Activated CD4-positive, alpha-beta memory T cell treated with anti-CD3 and anti-CD28 coated beads for 36 hours (primary cell): ENCODE measurements at regions of chr7 and their contacts with region 1.

Region 1: DNA sequence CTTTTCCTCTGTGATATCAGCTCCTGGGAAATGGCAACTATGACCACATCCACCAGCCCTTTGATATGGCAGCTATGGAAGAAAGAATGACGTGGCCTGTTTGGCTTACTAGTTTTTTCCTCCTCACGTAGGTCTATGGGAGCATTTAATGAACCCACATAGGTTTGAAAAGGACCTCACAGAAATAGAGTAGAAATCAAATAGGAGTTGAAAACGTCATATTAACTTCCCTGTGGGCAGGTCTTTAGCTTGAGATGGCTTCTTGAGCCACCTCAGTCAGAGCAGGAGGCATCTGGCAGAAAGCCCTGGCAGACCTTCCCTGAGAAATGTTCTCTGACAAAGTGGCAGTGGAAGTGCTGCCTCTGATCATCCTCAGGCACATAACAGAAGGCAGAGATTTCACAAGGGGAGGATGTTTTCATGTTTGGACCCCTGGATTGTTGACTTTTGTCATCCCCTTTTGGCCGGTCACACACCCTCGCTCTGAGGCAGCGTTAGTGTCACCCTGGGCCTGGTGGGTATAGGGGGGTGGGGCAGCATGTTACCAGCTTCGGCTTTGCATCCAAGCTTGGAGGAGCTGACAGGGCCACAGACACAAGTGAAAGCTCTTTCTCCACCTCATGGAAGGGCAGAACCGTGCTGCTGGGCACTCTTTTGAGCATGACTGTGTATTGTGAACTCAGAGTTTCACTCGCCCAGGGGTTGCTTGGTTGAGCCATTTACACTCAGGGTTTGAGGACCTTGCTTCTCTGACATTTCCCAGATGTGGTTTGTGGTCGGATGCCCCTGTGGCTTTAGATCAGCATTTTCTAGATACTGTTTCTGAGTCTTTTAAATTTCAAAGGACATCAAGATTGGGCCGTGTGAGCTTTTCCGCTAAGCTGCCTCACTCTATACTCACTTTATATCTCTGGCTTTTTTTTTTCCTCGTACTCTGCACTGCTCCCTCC is 184.2 kb downstream of the STK31 start:
- DNase-seq: peak; percentile 76
- H3K4me3 Mint-ChIP-seq: no peak overlapping the region
- H3K27ac Mint-ChIP-seq: peak overlapping the region; percentile 38
- H3K4me1 Mint-ChIP-seq: peaks cover 29% of the 10 kb centered on the region
- H3K27me3 Mint-ChIP-seq: peaks cover 7% of the 10 kb centered on the region

Region 2: DNA sequence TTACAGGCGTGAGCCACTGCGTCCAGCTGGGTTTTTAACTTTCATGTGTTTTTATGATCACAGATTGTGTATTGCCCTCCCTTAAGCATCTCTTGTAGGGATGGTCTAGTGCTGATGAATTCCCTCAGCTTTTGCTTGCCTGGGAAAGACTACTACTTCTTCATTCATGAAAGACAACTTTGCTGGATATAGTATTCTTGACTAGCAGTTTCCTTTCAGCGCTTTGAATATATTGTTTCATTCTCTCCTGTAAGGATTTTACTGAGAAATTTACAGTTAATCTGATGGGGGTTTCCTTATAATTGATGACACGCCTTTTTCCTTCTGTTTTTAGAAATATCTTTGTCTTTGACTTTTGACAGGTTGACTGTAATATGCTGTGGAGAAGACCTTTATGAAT is 151.0 kb before region 1 on chr7:
- CTCF ChIA-PET with region 1: no interaction called
- POLR2A ChIA-PET with region 1: no interaction called
- intact Hi-C with region 1: no loop called
- DNase-seq: no peak
- H3K4me3 Mint-ChIP-seq: no peak overlapping the region
- H3K27ac Mint-ChIP-seq: no peak overlapping the region
- H3K4me1 Mint-ChIP-seq: no peaks in the 10 kb centered on the region
- H3K27me3 Mint-ChIP-seq: no peaks in the 10 kb centered on the region

Region 3: DNA sequence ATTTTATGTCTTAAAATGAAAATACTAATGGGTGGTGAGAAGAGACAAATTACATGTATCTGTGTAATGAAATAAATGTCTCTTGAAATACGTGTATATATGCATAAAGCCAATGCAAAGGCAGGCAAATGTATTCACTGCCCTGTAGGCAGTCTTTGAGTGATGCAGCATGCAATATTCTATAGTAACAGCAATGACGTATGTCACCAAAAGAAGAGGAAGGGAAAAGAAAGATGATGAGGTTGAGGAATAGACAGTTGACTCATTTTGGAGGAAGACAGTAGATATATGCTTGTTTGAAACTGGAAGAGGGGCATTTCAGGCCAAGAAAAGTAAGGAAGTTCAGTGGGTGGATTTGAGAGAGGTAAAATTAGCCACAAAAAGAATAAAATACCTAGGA is 56.6 kb before region 1 on chr7:
- CTCF ChIA-PET with region 1: no interaction called
- POLR2A ChIA-PET with region 1: no interaction called
- intact Hi-C with region 1: no loop called
- DNase-seq: no peak
- H3K4me3 Mint-ChIP-seq: no peak overlapping the region
- H3K27ac Mint-ChIP-seq: no peak overlapping the region
- H3K4me1 Mint-ChIP-seq: no peaks in the 10 kb centered on the region
- H3K27me3 Mint-ChIP-seq: peaks cover 2% of the 10 kb centered on the region

Region 4: GRCh38 chr7:23918856-23919255 is 24.6 kb after region 1 on chr7:
- CTCF ChIA-PET with region 1: no interaction called
- POLR2A ChIA-PET with region 1: no interaction called
- intact Hi-C with region 1: no loop called
- DNase-seq: no peak
- H3K4me3 Mint-ChIP-seq: no peak overlapping the region
- H3K27ac Mint-ChIP-seq: no peak overlapping the region
- H3K4me1 Mint-ChIP-seq: no peaks in the 10 kb centered on the region
- H3K27me3 Mint-ChIP-seq: peaks cover 10% of the 10 kb centered on the region

Region 5: DNA sequence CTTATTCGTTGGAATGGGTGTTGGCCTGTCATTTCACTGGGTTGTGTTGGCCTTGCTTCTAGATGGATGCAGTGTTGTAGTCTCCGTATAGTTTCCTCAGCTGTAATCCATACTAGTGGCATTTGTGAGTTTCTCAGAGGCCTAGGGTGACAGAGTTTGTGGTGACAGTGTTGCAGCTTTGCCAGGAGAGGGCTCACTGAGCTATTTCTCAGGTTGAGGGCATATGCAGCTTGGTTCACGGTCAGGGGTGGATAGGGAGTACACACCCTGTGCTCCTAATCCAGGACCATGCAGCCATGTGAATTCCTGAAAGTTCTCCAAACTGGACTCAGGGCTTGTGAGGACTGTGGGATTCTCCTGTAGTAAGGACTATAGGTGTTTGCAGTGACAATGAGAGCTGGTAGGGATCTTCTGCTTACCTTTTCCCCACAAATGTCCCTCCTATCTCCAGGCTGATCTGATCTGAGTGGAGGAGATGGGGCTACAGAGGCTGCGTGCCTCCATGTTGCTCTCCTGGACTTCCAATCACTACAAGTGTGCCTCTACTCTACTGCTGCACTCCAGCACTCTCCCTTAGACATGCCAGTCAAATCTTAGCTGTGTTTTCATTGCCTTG is 44.8 kb after region 1 on chr7:
- CTCF ChIA-PET with region 1: no interaction called
- POLR2A ChIA-PET with region 1: no interaction called
- intact Hi-C with region 1: no loop called
- DNase-seq: no peak
- H3K4me3 Mint-ChIP-seq: no peak overlapping the region
- H3K27ac Mint-ChIP-seq: no peak overlapping the region
- H3K4me1 Mint-ChIP-seq: no peaks in the 10 kb centered on the region
- H3K27me3 Mint-ChIP-seq: peaks cover 13% of the 10 kb centered on the region

Region 6: GRCh38 chr7:24036042-24036412 is 141.8 kb after region 1 on chr7:
- CTCF ChIA-PET with region 1: no interaction called
- POLR2A ChIA-PET with region 1: no interaction called
- intact Hi-C with region 1: loop called (anchors 10 kb)
- DNase-seq: no peak
- H3K4me3 Mint-ChIP-seq: no peak overlapping the region
- H3K27ac Mint-ChIP-seq: no peak overlapping the region
- H3K4me1 Mint-ChIP-seq: peaks cover 8% of the 10 kb centered on the region
- H3K27me3 Mint-ChIP-seq: no peaks in the 10 kb centered on the region